A673 (cell line): ENCODE measurements at regions of chr11 and their contacts with region 1.

Region 1: DNA sequence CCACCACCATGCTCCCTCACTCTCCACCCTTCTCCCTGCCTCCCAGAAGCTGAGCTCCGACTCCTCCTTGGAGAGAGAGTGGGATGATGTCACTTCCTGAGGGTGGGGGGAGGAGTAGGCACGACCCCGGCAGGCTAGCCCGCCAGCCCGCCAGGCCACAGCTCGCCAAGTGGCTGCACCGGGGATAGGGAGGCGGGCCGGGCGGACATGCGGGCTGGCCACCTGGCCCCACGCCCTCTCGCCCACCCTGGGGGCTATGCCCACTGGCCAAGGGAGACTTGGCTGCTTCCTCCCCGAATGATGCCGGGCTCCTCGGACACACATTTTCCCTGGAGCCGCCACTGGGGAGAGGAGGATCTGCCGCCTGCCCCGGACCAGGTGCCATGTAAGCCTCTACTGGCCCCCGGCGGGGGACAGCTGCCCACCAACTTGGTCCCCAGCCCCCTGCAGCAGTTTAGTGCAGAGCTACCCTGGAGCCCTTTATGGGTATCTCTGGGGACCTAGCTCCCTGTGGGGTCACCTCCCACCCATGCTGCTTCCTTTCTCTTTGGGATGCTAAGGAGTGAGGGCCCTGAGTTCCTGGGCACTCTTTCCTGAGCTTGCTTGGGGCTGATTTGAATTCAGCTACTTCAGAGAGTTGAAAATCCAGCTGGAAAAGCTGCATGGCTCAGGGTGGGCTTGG is 33.7 kb upstream of the MYRF start:
- DNase-seq: peak; percentile 92
- H3K4me3 ChIP-seq: peak overlapping the region; percentile 63
- H3K27ac ChIP-seq: peak overlapping the region; percentile 82
- H3K4me1 ChIP-seq: peaks cover 15% of the 10 kb centered on the region
- H3K27me3 ChIP-seq: no peaks in the 10 kb centered on the region
- CTCF ChIP-seq: no peak

Region 2: DNA sequence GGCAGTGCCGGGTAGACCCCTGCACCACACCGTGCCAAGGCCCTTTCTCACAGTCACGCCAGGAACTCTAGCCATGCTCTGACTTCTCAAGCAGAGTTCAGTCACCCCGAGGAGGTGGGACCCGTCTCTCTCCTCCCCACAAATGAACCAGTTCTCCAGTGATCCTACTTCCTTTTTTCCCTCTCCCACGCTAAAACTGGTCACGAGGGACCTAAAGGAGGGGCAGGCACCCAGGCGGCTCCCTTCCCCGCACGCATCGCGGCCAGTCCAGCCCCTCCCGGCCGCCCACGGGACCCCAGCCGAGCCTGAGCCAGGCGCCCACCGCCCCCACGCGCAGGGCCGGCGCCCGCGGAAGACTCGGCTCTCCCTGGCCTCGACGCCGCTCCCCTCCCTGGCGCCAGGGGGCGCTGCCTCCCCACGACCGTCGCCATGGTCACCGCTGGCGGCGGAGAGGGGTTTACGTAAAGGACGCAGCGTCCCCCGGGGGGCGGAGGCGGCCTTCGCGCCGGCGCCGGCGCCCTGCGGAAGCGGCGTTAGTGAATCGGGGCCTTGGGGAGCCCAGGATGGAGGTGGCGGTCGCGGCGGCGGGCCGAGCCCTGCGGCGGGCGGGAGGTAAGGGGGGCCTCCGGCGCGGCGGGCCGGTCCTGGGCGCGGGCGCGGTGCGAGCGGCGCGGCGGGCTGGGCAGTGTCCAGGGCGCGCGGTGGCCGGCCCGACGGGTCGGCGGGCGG is 38.7 kb before region 1 on chr11 and contains the start of gene DAGLA:
- CTCF ChIA-PET with region 1: interaction called, 3 read pairs
- POLR2A ChIA-PET with region 1: no interaction called
- intact Hi-C with region 1: loop called (anchors 1 kb)
- DNase-seq: peak; percentile 85
- H3K4me3 ChIP-seq: peak within 1 kb of the TSS; percentile 47
- H3K27ac ChIP-seq: no peak within 1 kb of the TSS
- H3K4me1 ChIP-seq: peaks cover 15% of the 10 kb centered on the region
- H3K27me3 ChIP-seq: peaks cover 22% of the 10 kb centered on the region
- CTCF ChIP-seq: peak; percentile 89
- total RNA-seq, gene DAGLA: 10.9 and 11.0 TPM in 2 replicates